ENCODE measurements at regions of chr3 and their contacts with region 1.

Region 1: GRCh38 chr3:51682079-51682478 is 11.0 kb downstream of the TEX264 start:
- DNase-seq: peak; percentile 81
- ATAC-seq: peak; percentile 89
- H3K4me3 ChIP-seq: no peak overlapping the region
- H3K27ac ChIP-seq: peak overlapping the region; percentile 51
- H3K4me1 ChIP-seq: peaks cover 38% of the 10 kb centered on the region
- H3K27me3 ChIP-seq: no peaks in the 10 kb centered on the region
- CTCF ChIP-seq: peak; percentile 90 to 99 (median 93); a peak in 5 of 6 replicates
- EP300 ChIP-seq: no peak
- POLR2A ChIP-seq: no peak
- RAD21 ChIP-seq: peak; percentile 93

Region 2: GRCh38 chr3:51391075-51391567 is 291.0 kb before region 1 on chr3 and contains the start of gene RBM15B:
- CTCF ChIA-PET with region 1: interaction called, 37 read pairs
- POLR2A ChIA-PET with region 1: no interaction called
- RAD21 ChIA-PET with region 1: interaction called, 6 read pairs
- SMC1A ChIA-PET with region 1: interaction called, 13 read pairs
- in situ Hi-C with region 1: loop called (anchors 5 kb)
- intact Hi-C with region 1: loop called (anchors 1 kb)
- DNase-seq: peak; percentile 80
- ATAC-seq: peak; percentile 96
- H3K4me3 ChIP-seq: peak within 1 kb of the TSS; percentile 83
- H3K27ac ChIP-seq: peak within 1 kb of the TSS; percentile 73
- H3K4me1 ChIP-seq: peaks cover 25% of the 10 kb centered on the region
- H3K27me3 ChIP-seq: no peaks in the 10 kb centered on the region
- CTCF ChIP-seq: peak; percentile 84 to 93 (median 93); a peak in 4 of 6 replicates
- EP300 ChIP-seq: 0 out of 4 replicates have a peak, but pooled peaks of 1 of the 2 experiments have one; percentile 12
- POLR2A ChIP-seq: peak; percentile 81
- RAD21 ChIP-seq: peak; percentile 44; the same call in 1 of the 2 replicates
- polyA plus RNA-seq, gene RBM15B: 2.4 to 3.0 TPM

Region 3: GRCh38 chr3:51511000-51511399 is 171.1 kb before region 1 on chr3:
- CTCF ChIA-PET with region 1: interaction called, 243 read pairs
- POLR2A ChIA-PET with region 1: no interaction called
- RAD21 ChIA-PET with region 1: no interaction called
- SMC1A ChIA-PET with region 1: interaction called, 5 read pairs
- in situ Hi-C with region 1: no loop called
- intact Hi-C with region 1: no loop called
- DNase-seq: no peak
- ATAC-seq: no peak
- H3K4me3 ChIP-seq: no peak overlapping the region
- H3K27ac ChIP-seq: no peak overlapping the region
- H3K4me1 ChIP-seq: no peaks in the 10 kb centered on the region
- H3K27me3 ChIP-seq: no peaks in the 10 kb centered on the region
- CTCF ChIP-seq: no peak
- EP300 ChIP-seq: no peak
- POLR2A ChIP-seq: no peak
- RAD21 ChIP-seq: no peak

Region 4: GRCh38 chr3:51637941-51638471 is 44.1 kb before region 1 on chr3:
- CTCF ChIA-PET with region 1: interaction called, 84 read pairs
- POLR2A ChIA-PET with region 1: no interaction called
- RAD21 ChIA-PET with region 1: interaction called, 14 read pairs
- SMC1A ChIA-PET with region 1: interaction called, 8 read pairs
- in situ Hi-C with region 1: no loop called
- intact Hi-C with region 1: loop called (anchors 1 kb)
- DNase-seq: no peak
- ATAC-seq: peak; percentile 99
- H3K4me3 ChIP-seq: no peak overlapping the region
- H3K27ac ChIP-seq: no peak overlapping the region
- H3K4me1 ChIP-seq: no peaks in the 10 kb centered on the region
- H3K27me3 ChIP-seq: no peaks in the 10 kb centered on the region
- CTCF ChIP-seq: peak; percentile 86 to 97 (median 87); a peak in 5 of 6 replicates
- EP300 ChIP-seq: no peak
- POLR2A ChIP-seq: no peak
- RAD21 ChIP-seq: peak; percentile 66

Region 5: GRCh38 chr3:51718547-51719409 is 36.7 kb after region 1 on chr3:
- CTCF ChIA-PET with region 1: interaction called, 13 read pairs
- POLR2A ChIA-PET with region 1: no interaction called
- RAD21 ChIA-PET with region 1: interaction called, 6 read pairs
- SMC1A ChIA-PET with region 1: no interaction called
- in situ Hi-C with region 1: no loop called
- intact Hi-C with region 1: no loop called
- DNase-seq: peak; percentile 23
- ATAC-seq: peak; percentile 98
- H3K4me3 ChIP-seq: no peak overlapping the region
- H3K27ac ChIP-seq: no peak overlapping the region
- H3K4me1 ChIP-seq: no peaks in the 10 kb centered on the region
- H3K27me3 ChIP-seq: no peaks in the 10 kb centered on the region
- CTCF ChIP-seq: peak; percentile 71 to 96 (median 92)
- EP300 ChIP-seq: no peak
- POLR2A ChIP-seq: no peak
- RAD21 ChIP-seq: peak; percentile 32; the same call in 1 of the 2 replicates

Region 6: DNA sequence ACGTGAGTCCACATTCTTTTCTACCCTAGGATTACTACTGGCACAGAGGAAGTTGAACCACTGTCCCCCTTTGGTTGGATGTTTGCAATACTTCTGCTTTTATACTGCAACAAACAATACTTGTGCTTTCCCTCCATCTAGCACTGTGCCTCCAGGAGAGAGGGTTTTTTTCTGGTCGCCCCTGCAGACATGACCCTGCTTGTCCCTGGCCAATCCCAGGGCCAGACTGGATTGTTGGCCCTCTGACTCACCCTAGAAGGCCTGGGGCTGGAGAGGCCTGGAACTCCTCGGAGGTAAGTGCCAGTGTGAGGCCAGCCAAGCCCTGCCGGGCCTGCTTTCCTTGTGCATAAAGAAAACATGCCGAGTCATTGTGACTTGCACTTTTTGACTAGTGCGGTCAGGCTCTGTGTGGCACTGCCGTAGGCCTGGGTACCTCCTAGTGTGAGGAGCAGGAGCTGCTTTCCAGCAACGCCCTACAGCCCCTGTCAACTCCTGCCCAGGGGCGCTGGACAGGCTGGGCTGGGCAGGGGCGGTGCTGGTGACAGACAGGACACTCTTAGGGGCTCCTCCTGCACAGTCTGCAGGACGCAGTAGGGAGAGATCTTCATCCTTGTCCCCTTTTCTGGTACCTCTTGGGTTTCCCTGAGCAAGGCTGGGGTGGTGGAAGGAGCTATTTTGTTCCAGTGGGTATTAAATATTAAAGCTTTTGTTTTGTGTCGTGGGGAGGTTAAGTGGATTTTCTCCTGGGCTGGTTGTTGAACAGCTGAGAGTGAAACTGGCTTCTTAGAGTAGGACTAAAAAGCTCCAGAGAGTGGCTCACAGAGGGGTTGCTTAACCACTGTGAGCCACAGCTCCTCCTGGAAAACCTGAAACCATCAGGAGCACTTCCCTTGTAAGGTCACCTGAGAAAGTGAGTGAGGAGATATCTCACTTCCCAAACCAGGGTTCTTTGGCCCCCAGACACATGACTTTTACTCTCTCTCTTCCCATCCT is 1588.1 kb after region 1 on chr3:
- CTCF ChIA-PET with region 1: no interaction called
- POLR2A ChIA-PET with region 1: no interaction called
- RAD21 ChIA-PET with region 1: no interaction called
- SMC1A ChIA-PET with region 1: no interaction called
- in situ Hi-C with region 1: no loop called
- intact Hi-C with region 1: no loop called
- DNase-seq: peak; percentile 30
- ATAC-seq: peak; percentile 85
- H3K4me3 ChIP-seq: no peak overlapping the region
- H3K27ac ChIP-seq: peak overlapping the region; percentile 68
- H3K4me1 ChIP-seq: peaks cover 5% of the 10 kb centered on the region
- H3K27me3 ChIP-seq: no peaks in the 10 kb centered on the region
- CTCF ChIP-seq: no peak
- EP300 ChIP-seq: no peak
- POLR2A ChIP-seq: peak; percentile 53
- RAD21 ChIP-seq: no peak